ENCODE measurements at regions of chr10 and their contacts with region 1.

Region 1: DNA sequence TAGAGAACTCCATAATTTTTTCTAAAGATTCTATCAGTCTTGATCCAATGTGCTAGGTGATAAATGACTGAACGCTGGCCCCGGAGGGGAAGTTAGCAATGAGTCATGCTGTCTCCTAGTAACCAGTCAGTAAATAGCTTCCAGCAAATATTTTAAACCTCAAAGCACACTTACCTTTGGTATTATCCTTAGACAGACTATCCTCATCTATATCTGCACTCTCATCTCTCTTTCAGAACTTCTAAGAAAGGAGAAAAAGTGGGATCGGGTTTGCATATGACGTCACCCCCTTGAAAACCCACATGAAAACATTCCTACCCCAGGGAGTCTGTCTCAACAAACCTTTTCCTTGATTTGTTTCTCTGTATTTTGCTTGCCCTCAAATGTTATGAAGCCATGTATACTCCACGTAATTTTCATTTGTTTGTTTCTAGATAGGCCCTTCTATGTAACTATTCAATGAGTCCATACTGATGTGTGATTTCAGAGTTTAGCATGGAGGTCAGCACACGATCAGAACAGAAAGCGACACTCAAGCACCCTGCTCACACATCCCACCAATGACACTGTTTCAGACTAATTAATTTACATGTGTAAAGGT is 174.9 kb upstream of the NRP1 start:
- DNase-seq: peak; percentile 91 to 92
- H3K4me3 ChIP-seq: no peak overlapping the region
- H3K4me3 Mint-ChIP-seq: peak overlapping the region; percentile 64
- H3K27ac Mint-ChIP-seq: peak overlapping the region; percentile 90
- H3K4me1 ChIP-seq: peaks cover 38% of the 10 kb centered on the region
- H3K4me1 Mint-ChIP-seq: peaks cover 22% of the 10 kb centered on the region
- H3K27me3 ChIP-seq: no peaks in the 10 kb centered on the region
- H3K27me3 Mint-ChIP-seq: no peaks in the 10 kb centered on the region
- CTCF ChIP-seq: no peak

Region 2: GRCh38 chr10:33386971-33387370 is 122.4 kb before region 1 on chr10:
- CTCF ChIA-PET with region 1: interaction called, 3 read pairs
- POLR2A ChIA-PET with region 1: no interaction called
- intact Hi-C with region 1: loop called (anchors 5 kb)
- DNase-seq: peak; percentile 78 to 80
- H3K4me3 ChIP-seq: no peak overlapping the region
- H3K4me3 Mint-ChIP-seq: peak overlapping the region; percentile 34
- H3K27ac Mint-ChIP-seq: peak overlapping the region; percentile 93
- H3K4me1 ChIP-seq: peaks cover 58% of the 10 kb centered on the region
- H3K4me1 Mint-ChIP-seq: peaks cover 36% of the 10 kb centered on the region
- H3K27me3 ChIP-seq: no peaks in the 10 kb centered on the region
- H3K27me3 Mint-ChIP-seq: no peaks in the 10 kb centered on the region
- CTCF ChIP-seq: no peak

Region 3: DNA sequence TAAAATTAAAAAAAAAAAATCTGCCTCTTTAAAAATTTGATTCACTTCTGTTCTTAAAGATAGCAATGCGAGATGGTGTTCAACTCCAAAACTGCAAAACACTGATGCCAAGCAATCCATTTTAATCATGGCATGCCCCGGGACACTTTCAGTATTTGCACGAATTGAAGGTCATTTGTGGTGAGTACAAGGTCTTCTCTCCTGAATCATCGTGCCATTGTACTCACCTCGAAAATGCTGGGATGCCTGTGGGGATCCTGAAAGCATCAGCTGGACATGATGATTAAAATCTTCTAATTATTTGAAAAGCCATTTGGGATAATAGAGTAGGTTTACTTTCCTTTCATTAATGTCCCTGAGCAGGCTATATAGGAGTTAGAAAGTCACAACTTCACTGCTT is 49.7 kb before region 1 on chr10:
- CTCF ChIA-PET with region 1: no interaction called
- POLR2A ChIA-PET with region 1: no interaction called
- intact Hi-C with region 1: loop called (anchors 5 kb)
- DNase-seq: no peak
- H3K4me3 ChIP-seq: no peak overlapping the region
- H3K4me3 Mint-ChIP-seq: no peak overlapping the region
- H3K27ac Mint-ChIP-seq: no peak overlapping the region
- H3K4me1 ChIP-seq: peaks cover 17% of the 10 kb centered on the region
- H3K4me1 Mint-ChIP-seq: peaks cover 12% of the 10 kb centered on the region
- H3K27me3 ChIP-seq: no peaks in the 10 kb centered on the region
- H3K27me3 Mint-ChIP-seq: no peaks in the 10 kb centered on the region
- CTCF ChIP-seq: no peak

Region 4: GRCh38 chr10:33559105-33559504 is 49.8 kb after region 1 on chr10:
- CTCF ChIA-PET with region 1: no interaction called
- POLR2A ChIA-PET with region 1: no interaction called
- intact Hi-C with region 1: no loop called
- DNase-seq: no peak
- H3K4me3 ChIP-seq: no peak overlapping the region
- H3K4me3 Mint-ChIP-seq: no peak overlapping the region
- H3K27ac Mint-ChIP-seq: no peak overlapping the region
- H3K4me1 ChIP-seq: no peaks in the 10 kb centered on the region
- H3K4me1 Mint-ChIP-seq: no peaks in the 10 kb centered on the region
- H3K27me3 ChIP-seq: no peaks in the 10 kb centered on the region
- H3K27me3 Mint-ChIP-seq: no peaks in the 10 kb centered on the region
- CTCF ChIP-seq: no peak

Region 5: DNA sequence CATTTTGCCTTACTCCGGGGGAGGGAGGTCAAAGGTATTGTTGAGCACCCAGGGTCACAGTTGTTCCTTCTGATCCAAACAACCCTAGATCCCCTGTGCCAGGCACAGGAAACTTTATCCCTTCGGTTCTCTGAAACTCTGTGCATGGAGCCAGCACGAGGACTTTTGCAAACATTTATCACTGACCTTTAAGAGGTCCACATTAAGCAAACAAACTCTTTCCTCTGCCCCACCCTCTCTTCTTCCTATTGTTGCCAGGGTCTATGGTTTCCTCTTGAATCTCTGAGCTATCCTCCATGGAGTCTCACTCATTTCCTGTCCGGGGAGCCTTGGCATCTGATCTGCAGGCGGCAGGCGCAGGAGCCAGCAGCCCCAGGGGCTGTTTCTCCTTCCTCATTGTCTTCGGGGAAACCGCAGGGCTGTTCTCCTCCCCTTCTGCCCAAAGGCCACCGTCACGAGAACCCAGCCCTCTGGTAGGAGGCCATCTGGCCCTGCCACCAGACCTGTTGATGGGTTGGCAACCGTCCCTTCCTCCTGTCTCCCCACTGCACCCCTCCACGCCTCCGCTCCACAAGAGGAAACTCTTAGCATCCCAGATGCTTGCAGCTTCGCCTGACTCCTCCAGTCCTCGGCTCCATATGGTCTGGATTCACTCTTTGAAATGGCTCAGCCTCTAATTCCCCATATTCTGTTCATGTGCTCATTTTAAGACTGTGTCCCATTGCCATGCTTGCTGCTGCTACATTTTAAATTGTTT is 152.4 kb after region 1 on chr10:
- CTCF ChIA-PET with region 1: no interaction called
- POLR2A ChIA-PET with region 1: no interaction called
- intact Hi-C with region 1: no loop called
- DNase-seq: no peak
- H3K4me3 ChIP-seq: no peak overlapping the region
- H3K4me3 Mint-ChIP-seq: no peak overlapping the region
- H3K27ac Mint-ChIP-seq: no peak overlapping the region
- H3K4me1 ChIP-seq: no peaks in the 10 kb centered on the region
- H3K4me1 Mint-ChIP-seq: peaks cover 6% of the 10 kb centered on the region
- H3K27me3 ChIP-seq: no peaks in the 10 kb centered on the region
- H3K27me3 Mint-ChIP-seq: no peaks in the 10 kb centered on the region
- CTCF ChIP-seq: no peak

Region 6: GRCh38 chr10:33801748-33802147 is 292.4 kb after region 1 on chr10:
- CTCF ChIA-PET with region 1: no interaction called
- POLR2A ChIA-PET with region 1: no interaction called
- intact Hi-C with region 1: loop called (anchors 5 kb)
- DNase-seq: peak; percentile 81 to 88
- H3K4me3 ChIP-seq: no peak overlapping the region
- H3K4me3 Mint-ChIP-seq: peak overlapping the region; percentile 39
- H3K27ac Mint-ChIP-seq: peak overlapping the region; percentile 90
- H3K4me1 ChIP-seq: peaks cover 69% of the 10 kb centered on the region
- H3K4me1 Mint-ChIP-seq: peaks cover 50% of the 10 kb centered on the region
- H3K27me3 ChIP-seq: no peaks in the 10 kb centered on the region
- H3K27me3 Mint-ChIP-seq: no peaks in the 10 kb centered on the region
- CTCF ChIP-seq: no peak

Region 7: DNA sequence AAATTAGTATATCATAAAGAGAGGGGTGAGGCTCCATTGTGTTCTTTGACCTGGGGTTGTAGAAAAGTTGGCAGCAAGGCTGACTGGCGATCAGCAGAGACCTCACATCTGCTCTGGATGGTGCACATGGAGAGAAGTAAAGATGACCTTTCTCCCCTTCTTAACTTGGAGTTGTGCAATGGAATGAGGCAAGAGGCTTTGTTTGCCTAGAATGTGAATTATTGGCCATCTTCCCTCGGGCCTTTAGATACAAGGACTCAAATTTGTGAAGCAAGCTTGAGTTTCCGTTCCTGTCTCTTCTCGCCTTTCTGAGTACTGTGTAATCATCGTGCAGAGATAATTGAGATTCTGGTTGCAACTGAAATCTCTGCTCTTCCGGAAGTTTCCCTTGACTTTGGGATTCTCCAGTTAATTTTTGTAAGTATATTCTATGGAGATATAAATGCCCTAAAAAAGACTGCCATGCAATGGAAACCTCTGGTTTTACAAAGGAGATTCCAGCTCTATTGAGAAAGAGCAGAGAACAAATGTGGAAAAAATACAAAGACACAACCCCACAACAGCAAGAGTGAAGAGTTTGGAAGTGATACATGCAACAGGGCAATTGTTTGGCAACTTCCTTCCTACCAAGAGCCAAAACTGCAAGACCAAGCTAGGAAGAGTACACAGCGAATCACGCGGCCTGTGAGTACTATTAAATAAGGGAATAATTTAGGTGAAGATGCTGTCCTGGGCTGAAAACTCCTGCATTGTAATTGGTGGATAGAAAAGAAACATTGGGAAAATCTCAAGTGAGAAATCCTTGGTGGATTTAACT is 367.5 kb after region 1 on chr10:
- CTCF ChIA-PET with region 1: no interaction called
- POLR2A ChIA-PET with region 1: no interaction called
- intact Hi-C with region 1: loop called (anchors 10 kb)
- DNase-seq: peak; percentile 80 to 81
- H3K4me3 ChIP-seq: no peak overlapping the region
- H3K4me3 Mint-ChIP-seq: peak overlapping the region; percentile 55
- H3K27ac Mint-ChIP-seq: peak overlapping the region; percentile 86
- H3K4me1 ChIP-seq: peaks cover 24% of the 10 kb centered on the region
- H3K4me1 Mint-ChIP-seq: peaks cover 22% of the 10 kb centered on the region
- H3K27me3 ChIP-seq: no peaks in the 10 kb centered on the region
- H3K27me3 Mint-ChIP-seq: no peaks in the 10 kb centered on the region
- CTCF ChIP-seq: no peak

Region 8: GRCh38 chr10:34213193-34213804 is 704.0 kb after region 1 on chr10:
- CTCF ChIA-PET with region 1: no interaction called
- POLR2A ChIA-PET with region 1: no interaction called
- intact Hi-C with region 1: loop called (anchors 10 kb)
- DNase-seq: peak; percentile 82 to 85
- H3K4me3 ChIP-seq: no peak overlapping the region
- H3K4me3 Mint-ChIP-seq: peak overlapping the region; percentile 51
- H3K27ac Mint-ChIP-seq: peak overlapping the region; percentile 79
- H3K4me1 ChIP-seq: peaks cover 47% of the 10 kb centered on the region
- H3K4me1 Mint-ChIP-seq: peaks cover 54% of the 10 kb centered on the region
- H3K27me3 ChIP-seq: no peaks in the 10 kb centered on the region
- H3K27me3 Mint-ChIP-seq: no peaks in the 10 kb centered on the region
- CTCF ChIP-seq: peak in 1 of 2 experiments; percentile 47

Measured in Caco-2 (cell line).